ENCODE measurements at regions of chr5 and their contacts with region 1.

Region 1: DNA sequence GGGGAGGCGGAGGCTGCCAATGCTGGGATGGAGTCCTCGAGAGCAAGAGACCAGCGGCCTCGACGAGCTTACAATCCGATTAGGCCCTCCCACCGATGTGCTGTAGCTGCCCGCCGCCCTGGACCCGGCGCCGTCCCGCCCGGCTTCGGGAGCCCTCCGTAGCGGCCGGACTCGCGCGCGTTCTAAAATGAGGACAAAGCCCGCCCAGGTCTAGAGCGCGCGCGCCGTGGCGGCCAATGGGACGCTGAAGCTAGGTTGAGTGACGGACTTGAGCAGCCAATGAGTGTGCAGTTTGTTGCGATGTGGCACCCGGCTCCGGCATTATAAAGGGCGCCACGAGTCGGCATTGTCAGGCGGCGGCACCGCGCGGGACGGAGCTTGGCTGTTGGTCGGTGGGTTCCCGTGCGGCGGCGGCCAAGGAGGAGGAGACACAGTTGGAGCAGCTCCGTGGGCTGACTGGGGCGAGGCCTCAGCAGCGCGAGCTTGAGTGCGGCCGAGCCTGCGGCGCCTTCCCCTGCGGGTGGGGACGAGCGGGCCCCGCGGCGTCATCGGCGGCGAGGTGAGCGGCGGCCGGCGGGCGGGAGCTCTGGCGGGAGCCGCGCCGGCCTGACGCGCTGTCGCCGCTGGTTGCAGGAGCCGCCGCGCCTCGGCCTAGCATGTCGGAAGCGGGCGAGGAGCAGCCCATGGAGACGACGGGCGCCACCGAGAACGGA is at the start of gene HNRNPAB:
- DNase-seq: peak; percentile 97
- ATAC-seq: peak; percentile 83
- H3K4me3 Mint-ChIP-seq: peak within 1 kb of the TSS; percentile 97
- H3K27ac Mint-ChIP-seq: peak within 1 kb of the TSS; percentile 99
- H3K4me1 Mint-ChIP-seq: peaks cover 39% of the 10 kb centered on the region
- H3K27me3 Mint-ChIP-seq: peaks cover 2% of the 10 kb centered on the region
- CTCF ChIP-seq: no peak
- total RNA-seq, gene HNRNPAB: 392 to 399 TPM

Region 2: DNA sequence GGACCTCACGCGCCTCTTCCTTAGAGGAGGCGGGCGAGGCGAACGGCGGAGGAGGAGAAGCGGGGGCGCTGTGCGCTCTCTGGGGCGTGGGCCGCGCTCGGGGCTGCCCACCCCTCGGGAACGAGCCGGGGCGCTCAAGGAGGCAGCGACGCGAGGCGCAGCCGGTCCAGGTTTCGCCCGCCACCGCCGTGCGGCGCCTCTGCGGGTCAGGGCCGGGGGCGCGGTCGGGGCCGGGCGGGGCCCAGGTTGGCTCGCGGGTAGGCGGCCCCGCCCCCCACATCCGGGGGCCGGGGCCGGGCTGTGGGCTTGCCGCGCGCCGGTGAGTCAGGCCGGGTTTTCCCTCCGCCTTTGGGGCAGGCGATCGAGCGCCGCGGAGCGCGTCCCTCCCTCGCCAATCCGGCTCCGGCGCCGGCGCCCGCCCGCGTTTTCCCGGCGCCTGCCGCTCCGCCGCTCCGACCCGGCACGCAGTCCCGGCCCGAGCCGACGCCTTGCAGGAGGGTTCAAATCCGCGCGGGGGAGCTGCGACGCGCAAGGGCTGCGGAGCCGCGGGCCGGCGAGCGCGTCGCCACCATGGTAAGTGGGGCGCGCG is 91.0 kb before region 1 on chr5 and contains the start of gene N4BP3:
- CTCF ChIA-PET with region 1: no interaction called
- POLR2A ChIA-PET with region 1: interaction called, 20 read pairs
- intact Hi-C with region 1: no loop called
- DNase-seq: peak; percentile 88
- ATAC-seq: peak; percentile 63
- H3K4me3 Mint-ChIP-seq: peak within 1 kb of the TSS; percentile 98
- H3K27ac Mint-ChIP-seq: peak within 1 kb of the TSS; percentile 95
- H3K4me1 Mint-ChIP-seq: peaks cover 23% of the 10 kb centered on the region
- H3K27me3 Mint-ChIP-seq: no peaks in the 10 kb centered on the region
- CTCF ChIP-seq: no peak
- total RNA-seq, gene N4BP3: 33.2 to 33.4 TPM

Region 3: DNA sequence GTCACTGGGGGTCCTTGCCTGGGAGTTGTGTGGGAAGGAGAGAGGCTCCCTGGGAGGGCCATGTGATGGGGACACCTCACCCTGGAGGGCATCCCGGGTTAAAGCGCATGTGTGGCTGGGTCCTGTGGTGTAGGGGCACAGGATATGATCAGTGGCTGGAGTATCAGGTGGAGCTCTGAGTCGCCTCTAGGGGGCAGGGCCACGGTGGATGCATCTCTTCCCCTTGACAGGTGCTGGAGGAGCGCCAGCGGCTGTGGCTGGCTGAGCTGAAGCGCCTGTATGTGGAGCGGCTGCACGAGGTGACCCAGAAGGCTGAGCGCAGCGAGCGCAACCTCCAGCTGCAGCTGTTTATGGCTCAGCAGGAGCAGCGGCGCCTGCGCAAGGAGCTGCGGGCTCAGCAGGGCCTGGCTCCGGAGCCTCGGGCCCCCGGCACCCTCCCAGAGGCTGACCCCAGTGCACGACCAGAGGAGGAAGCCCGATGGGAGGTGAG is 83.4 kb before region 1 on chr5:
- CTCF ChIA-PET with region 1: interaction called, 3 read pairs
- POLR2A ChIA-PET with region 1: interaction called, 20 read pairs
- intact Hi-C with region 1: no loop called
- DNase-seq: peak; percentile 94
- ATAC-seq: peak; percentile 74
- H3K4me3 Mint-ChIP-seq: no peak overlapping the region
- H3K27ac Mint-ChIP-seq: no peak overlapping the region
- H3K4me1 Mint-ChIP-seq: peaks cover 36% of the 10 kb centered on the region
- H3K27me3 Mint-ChIP-seq: no peaks in the 10 kb centered on the region
- CTCF ChIP-seq: peak; percentile 67

Region 4: GRCh38 chr5:178221282-178221681 is 16.9 kb after region 1 on chr5:
- CTCF ChIA-PET with region 1: no interaction called
- POLR2A ChIA-PET with region 1: interaction called, 431 read pairs
- intact Hi-C with region 1: no loop called
- DNase-seq: no peak
- ATAC-seq: no peak
- H3K4me3 Mint-ChIP-seq: no peak overlapping the region
- H3K27ac Mint-ChIP-seq: peak overlapping the region; percentile 27
- H3K4me1 Mint-ChIP-seq: peaks cover 21% of the 10 kb centered on the region
- H3K27me3 Mint-ChIP-seq: no peaks in the 10 kb centered on the region
- CTCF ChIP-seq: no peak

Region 5: GRCh38 chr5:178232124-178232919 is 28.0 kb after region 1 on chr5 and contains the start of gene PHYKPL:
- CTCF ChIA-PET with region 1: interaction called, 5 read pairs
- POLR2A ChIA-PET with region 1: interaction called, 431 read pairs
- intact Hi-C with region 1: no loop called
- DNase-seq: peak; percentile 74
- ATAC-seq: peak; percentile 64
- H3K4me3 Mint-ChIP-seq: peak within 1 kb of the TSS; percentile 91
- H3K27ac Mint-ChIP-seq: peak within 1 kb of the TSS; percentile 87
- H3K4me1 Mint-ChIP-seq: peaks cover 58% of the 10 kb centered on the region
- H3K27me3 Mint-ChIP-seq: no peaks in the 10 kb centered on the region
- CTCF ChIP-seq: no peak
- total RNA-seq, gene PHYKPL: 60.4 to 62.1 TPM

Measured in activated CD8-positive, alpha-beta T cell treated with anti-CD3 and anti-CD28 coated beads for 36 hours (primary cell).